B cell (primary cell): ENCODE measurements at regions of chr19 and their contacts with region 1.

Region 1: GRCh38 chr19:7340959-7341837 is 7.5 kb upstream of the ARHGEF18 start:
- DNase-seq: peak; percentile 90
- ATAC-seq: no peak
- H3K4me3 ChIP-seq: peak overlapping the region in 1 of 5 experiments; percentile 28
- H3K4me3 Mint-ChIP-seq: peak overlapping the region; percentile 70
- H3K27ac ChIP-seq: peak overlapping the region; percentile 68 to 75
- H3K27ac Mint-ChIP-seq: peak overlapping the region; percentile 95
- H3K4me1 ChIP-seq: peaks cover 93 to 99% of the 10 kb centered on the region in 2 donors
- H3K4me1 Mint-ChIP-seq: peaks cover 80% of the 10 kb centered on the region
- H3K27me3 ChIP-seq: no peaks in the 10 kb centered on the region
- H3K27me3 Mint-ChIP-seq: no peaks in the 10 kb centered on the region
- CTCF ChIP-seq: peak; percentile 90

Region 2: DNA sequence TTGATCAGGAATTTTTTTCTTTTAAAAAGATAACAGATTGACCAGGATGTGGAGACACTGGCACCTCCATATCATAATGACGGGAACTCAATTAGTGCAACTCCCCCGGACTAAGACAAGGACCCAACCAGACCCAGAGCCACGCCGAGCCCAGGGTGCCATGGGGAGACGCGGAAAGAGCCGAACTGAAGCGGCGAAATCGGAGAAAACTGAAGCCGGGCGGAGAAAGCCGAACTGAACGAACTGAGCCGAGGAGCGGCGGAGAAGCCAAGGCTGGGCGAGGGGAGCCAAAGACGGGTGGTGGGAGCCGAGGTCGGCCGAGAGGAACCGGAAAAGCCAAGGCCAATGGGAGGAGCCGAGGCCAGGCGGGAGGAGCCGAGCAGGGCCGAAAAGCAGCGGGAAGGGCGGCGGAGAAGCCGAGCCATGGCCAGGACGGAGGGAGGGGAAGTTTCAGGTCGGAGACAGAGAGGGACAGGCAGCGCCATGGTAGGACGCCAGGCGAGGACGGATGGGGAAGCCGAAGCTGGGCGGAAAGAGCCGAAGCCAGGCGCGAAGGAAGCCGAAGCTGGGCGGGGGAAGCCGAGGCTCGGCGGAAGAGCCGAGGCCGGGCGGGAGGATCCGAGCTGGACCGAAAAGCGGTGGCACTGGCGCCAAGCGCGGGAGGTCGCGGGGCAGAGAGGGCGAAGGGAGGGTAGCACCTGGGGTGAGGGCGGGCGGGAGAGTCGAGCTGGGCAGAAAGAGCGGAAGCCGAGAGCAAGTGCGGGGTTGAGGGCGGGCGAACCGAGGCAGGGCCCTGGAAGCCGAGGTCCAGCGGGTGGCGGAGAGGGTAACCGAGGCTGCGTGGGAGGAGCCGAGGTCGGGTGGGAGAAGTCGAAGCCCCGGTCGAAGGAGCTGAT is 242.2 kb before region 1 on chr19:
- CTCF ChIA-PET with region 1: interaction called, 18 read pairs
- POLR2A ChIA-PET with region 1: interaction called, 3 read pairs
- intact Hi-C with region 1: loop called (anchors 1 kb)
- DNase-seq: peak; percentile 91
- ATAC-seq: peak; percentile 91
- H3K4me3 ChIP-seq: peak overlapping the region; percentile 46 to 87 (median 82)
- H3K4me3 Mint-ChIP-seq: peak overlapping the region; percentile 93
- H3K27ac ChIP-seq: peak overlapping the region; percentile 76 to 93
- H3K27ac Mint-ChIP-seq: peak overlapping the region; percentile 90
- H3K4me1 ChIP-seq: peaks cover 10 to 14% of the 10 kb centered on the region in 2 donors
- H3K4me1 Mint-ChIP-seq: peaks cover 23% of the 10 kb centered on the region
- H3K27me3 ChIP-seq: no peaks in the 10 kb centered on the region
- H3K27me3 Mint-ChIP-seq: no peaks in the 10 kb centered on the region
- CTCF ChIP-seq: no peak

Region 3: GRCh38 chr19:7326105-7326877 is 14.9 kb before region 1 on chr19:
- CTCF ChIA-PET with region 1: interaction called, 175 read pairs
- POLR2A ChIA-PET with region 1: interaction called, 4 read pairs
- intact Hi-C with region 1: loop called (anchors 1 kb)
- DNase-seq: peak; percentile 51
- ATAC-seq: no peak
- H3K4me3 ChIP-seq: no peak overlapping the region
- H3K4me3 Mint-ChIP-seq: no peak overlapping the region
- H3K27ac ChIP-seq: no peak overlapping the region
- H3K27ac Mint-ChIP-seq: no peak overlapping the region
- H3K4me1 ChIP-seq: peaks cover 8% of the 10 kb centered on the region in 2 donors
- H3K4me1 Mint-ChIP-seq: peaks cover 5% of the 10 kb centered on the region
- H3K27me3 ChIP-seq: no peaks in the 10 kb centered on the region
- H3K27me3 Mint-ChIP-seq: no peaks in the 10 kb centered on the region
- CTCF ChIP-seq: peak; percentile 22

Region 4: DNA sequence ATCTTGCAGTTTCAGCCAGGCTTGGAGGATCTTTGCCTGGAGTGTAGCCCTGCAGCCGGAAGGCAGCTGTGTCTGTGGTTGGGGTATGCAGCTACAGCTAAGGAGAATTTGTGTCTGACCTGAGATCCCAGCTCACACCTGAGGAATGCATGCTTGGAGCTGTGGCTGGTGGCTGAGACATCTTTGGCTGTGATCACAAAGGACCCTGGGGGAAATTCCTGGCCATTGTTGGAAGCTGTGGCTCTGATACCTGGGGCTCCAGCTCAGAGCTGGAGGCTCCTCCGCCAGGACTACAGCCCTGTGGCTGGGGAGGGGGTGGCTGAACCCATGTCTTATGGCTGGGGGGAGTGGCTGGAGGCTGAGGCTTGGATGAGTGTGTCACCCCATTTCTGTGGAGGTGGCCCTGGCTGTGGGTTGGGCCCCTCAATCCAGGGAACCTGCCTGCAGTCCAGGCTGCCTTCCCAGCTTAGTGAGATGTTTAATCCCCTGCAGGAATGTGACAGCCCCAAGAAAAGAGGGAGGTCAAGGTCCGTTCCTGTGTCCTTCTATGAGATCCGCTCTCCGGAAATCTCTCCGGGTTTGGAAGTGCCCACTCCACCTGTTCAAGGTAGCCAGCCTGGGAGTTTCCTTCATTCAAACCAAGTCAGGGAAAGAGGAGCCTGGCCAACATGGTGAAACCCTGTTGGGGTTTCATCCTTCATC is 35.1 kb after region 1 on chr19:
- CTCF ChIA-PET with region 1: interaction called, 22 read pairs
- POLR2A ChIA-PET with region 1: interaction called, 4 read pairs
- intact Hi-C with region 1: loop called (anchors 1 kb)
- DNase-seq: no peak
- ATAC-seq: no peak
- H3K4me3 ChIP-seq: no peak overlapping the region
- H3K4me3 Mint-ChIP-seq: no peak overlapping the region
- H3K27ac ChIP-seq: no peak overlapping the region
- H3K27ac Mint-ChIP-seq: peak overlapping the region; percentile 26
- H3K4me1 ChIP-seq: peaks cover 0 to 5% of the 10 kb centered on the region in 2 donors
- H3K4me1 Mint-ChIP-seq: peaks cover 10% of the 10 kb centered on the region
- H3K27me3 ChIP-seq: no peaks in the 10 kb centered on the region
- H3K27me3 Mint-ChIP-seq: no peaks in the 10 kb centered on the region
- CTCF ChIP-seq: no peak

Region 5: GRCh38 chr19:7705387-7706187 is 364.4 kb after region 1 on chr19:
- CTCF ChIA-PET with region 1: no interaction called
- POLR2A ChIA-PET with region 1: no interaction called
- intact Hi-C with region 1: loop called (anchors 10 kb)
- DNase-seq: peak; percentile 94
- ATAC-seq: peak; percentile 45
- H3K4me3 ChIP-seq: peak overlapping the region in 4 of 5 experiments; percentile 12 to 42 (median 21)
- H3K4me3 Mint-ChIP-seq: peak overlapping the region; percentile 87
- H3K27ac ChIP-seq: peak overlapping the region; percentile 95 to 98
- H3K27ac Mint-ChIP-seq: peak overlapping the region; percentile 100
- H3K4me1 ChIP-seq: peaks cover 90 to 97% of the 10 kb centered on the region in 2 donors
- H3K4me1 Mint-ChIP-seq: peaks cover 83% of the 10 kb centered on the region
- H3K27me3 ChIP-seq: no peaks in the 10 kb centered on the region
- H3K27me3 Mint-ChIP-seq: no peaks in the 10 kb centered on the region
- CTCF ChIP-seq: no peak